Naive thymus-derived CD4-positive, alpha-beta T cell (primary cell): ENCODE measurements at regions of chr3 and their contacts with region 1.

Region 1: GRCh38 chr3:47380601-47381316 is at the start of gene PTPN23:
- DNase-seq: peak; percentile 96 to 99 (median 99)
- ATAC-seq: peak; percentile 82
- H3K4me3 ChIP-seq: peak within 1 kb of the TSS; percentile 86
- H3K4me3 Mint-ChIP-seq: peak within 1 kb of the TSS; percentile 90 to 100 (median 98)
- H3K27ac ChIP-seq: peak within 1 kb of the TSS; percentile 92
- H3K27ac Mint-ChIP-seq: peak within 1 kb of the TSS; percentile 92 to 100 (median 99)
- H3K4me1 ChIP-seq: peaks cover 23 to 26% of the 10 kb centered on the region in 2 donors
- H3K4me1 Mint-ChIP-seq: peaks cover 40 to 56% (median 48%) of the 10 kb centered on the region in 7 donors
- H3K27me3 ChIP-seq: no peaks in the 10 kb centered on the region
- H3K27me3 Mint-ChIP-seq: peaks cover 0 to 2% (median 0%) of the 10 kb centered on the region in 5 donors
- total RNA-seq, gene PTPN23: 35.8 to 51.2 (median 38.5) TPM

Region 2: DNA sequence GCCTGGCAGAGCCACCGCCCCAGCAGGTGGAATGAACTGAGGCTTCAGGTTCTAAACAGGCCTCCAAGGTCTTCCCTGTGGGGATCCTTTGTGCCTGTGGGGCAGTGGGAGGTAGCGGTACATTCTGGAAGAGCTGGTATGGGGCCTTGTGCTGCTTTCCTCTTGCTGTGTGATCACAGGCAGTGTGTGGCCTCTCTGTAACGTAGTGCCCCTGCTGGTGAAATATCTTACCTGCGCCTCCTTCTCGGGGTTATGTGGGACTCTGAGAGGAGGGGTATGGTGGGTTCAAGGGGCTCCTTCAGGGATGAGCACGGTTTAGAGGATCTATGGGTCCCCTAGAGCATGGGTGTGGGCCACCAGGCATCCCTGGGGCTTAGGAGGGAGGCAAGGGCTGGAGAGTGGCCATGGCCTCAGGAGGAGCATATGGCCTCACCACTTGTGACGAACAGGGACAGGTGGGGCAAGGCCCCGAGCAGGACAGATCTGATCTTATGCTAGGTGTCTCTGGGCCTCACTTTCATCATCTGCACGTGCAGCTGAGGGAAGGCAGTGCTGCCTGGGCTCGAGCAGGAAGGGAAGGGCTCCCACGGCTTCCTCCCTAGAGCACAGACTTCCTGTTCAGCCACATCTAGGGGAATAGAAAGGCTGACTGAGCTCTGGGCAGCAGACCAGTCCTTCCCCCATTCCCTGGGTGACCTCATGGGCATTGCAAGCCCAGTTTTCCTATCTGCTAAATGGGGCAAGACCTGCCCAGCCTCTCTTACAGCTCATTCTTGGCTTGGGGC is 685.4 kb before region 1 on chr3:
- CTCF ChIA-PET with region 1: no interaction called
- POLR2A ChIA-PET with region 1: interaction called, 3 read pairs
- intact Hi-C with region 1: loop called in 1 of 2 experiments (anchors 2 kb)
- DNase-seq: peak; percentile 19 to 58 (median 50)
- ATAC-seq: peak; percentile 37
- H3K4me3 ChIP-seq: peak overlapping the region; percentile 6
- H3K4me3 Mint-ChIP-seq: peak overlapping the region; percentile 40 to 94 (median 76)
- H3K27ac ChIP-seq: peak overlapping the region; percentile 75
- H3K27ac Mint-ChIP-seq: peak overlapping the region; percentile 76 to 95 (median 92)
- H3K4me1 ChIP-seq: peaks cover 32 to 78% of the 10 kb centered on the region in 2 donors
- H3K4me1 Mint-ChIP-seq: peaks cover 32 to 94% (median 69%) of the 10 kb centered on the region in 7 donors
- H3K27me3 ChIP-seq: no peaks in the 10 kb centered on the region
- H3K27me3 Mint-ChIP-seq: peaks cover 0 to 39% (median 0%) of the 10 kb centered on the region in 5 donors

Region 3: DNA sequence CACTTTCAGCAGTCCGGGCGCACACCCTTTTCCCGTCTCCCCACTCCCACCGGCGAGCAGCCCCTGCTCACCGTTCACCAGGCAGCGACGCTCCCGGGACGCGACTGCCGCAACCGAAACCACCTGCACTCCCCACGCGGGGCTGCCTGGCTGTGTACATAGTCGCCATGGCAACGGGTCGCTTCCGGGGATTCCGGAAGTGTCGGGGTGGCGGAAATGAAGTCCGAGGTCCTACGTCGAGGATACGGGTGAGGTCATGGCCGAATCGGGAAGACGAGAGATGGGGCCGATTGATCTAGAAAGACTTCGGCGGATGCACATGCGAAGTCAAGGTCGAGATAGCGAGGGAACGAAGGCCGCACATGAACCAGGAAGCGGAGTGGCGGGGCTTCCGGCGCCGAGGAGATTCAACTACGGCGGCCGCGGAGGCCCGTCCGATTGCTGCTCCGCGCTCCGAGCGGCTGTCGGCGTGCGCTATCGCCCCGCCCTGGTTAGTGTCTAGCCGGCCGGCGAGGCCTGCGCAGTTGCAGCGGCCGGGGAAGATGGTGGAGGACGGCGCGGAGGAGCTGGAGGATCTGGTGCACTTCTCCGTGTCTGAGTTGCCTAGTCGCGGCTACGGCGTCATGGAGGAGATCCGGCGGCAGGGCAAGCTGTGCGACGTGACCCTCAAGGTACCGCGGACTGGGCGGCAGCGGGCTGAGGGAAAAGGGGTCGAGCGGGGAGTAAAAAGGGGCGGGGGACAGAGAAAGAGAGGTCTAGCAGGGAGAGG is 98.2 kb before region 1 on chr3 and contains the starts of genes KIF9 and KLHL18:
- CTCF ChIA-PET with region 1: no interaction called
- POLR2A ChIA-PET with region 1: interaction called, 3 read pairs
- intact Hi-C with region 1: loop called (anchors 1 kb)
- DNase-seq: peak; percentile 86 to 98 (median 97)
- ATAC-seq: peak; percentile 91
- H3K4me3 ChIP-seq: peak within 1 kb of the TSS; percentile 76
- H3K4me3 Mint-ChIP-seq: peak within 1 kb of the TSS; percentile 89 to 100 (median 98)
- H3K27ac ChIP-seq: peak within 1 kb of the TSS; percentile 93
- H3K27ac Mint-ChIP-seq: peak within 1 kb of the TSS; percentile 98 to 100 (median 99)
- H3K4me1 ChIP-seq: peaks cover 14 to 23% of the 10 kb centered on the region in 2 donors
- H3K4me1 Mint-ChIP-seq: peaks cover 29 to 56% (median 43%) of the 10 kb centered on the region in 7 donors
- H3K27me3 ChIP-seq: no peaks in the 10 kb centered on the region
- H3K27me3 Mint-ChIP-seq: no peaks in the 10 kb centered on the region
- total RNA-seq, gene KIF9: 2.7 to 15.0 (median 4.1) TPM
- total RNA-seq, gene KLHL18: 21.7 to 47.5 (median 24.5) TPM

Region 4: GRCh38 chr3:47420511-47421484 is 40.0 kb after region 1 on chr3:
- CTCF ChIA-PET with region 1: no interaction called
- POLR2A ChIA-PET with region 1: no interaction called
- intact Hi-C with region 1: loop called (anchors 1 kb)
- DNase-seq: peak; percentile 66 to 90 (median 88)
- ATAC-seq: peak; percentile 98
- H3K4me3 ChIP-seq: peak overlapping the region; percentile 29
- H3K4me3 Mint-ChIP-seq: peak overlapping the region; percentile 56 to 86 (median 78)
- H3K27ac ChIP-seq: peak overlapping the region; percentile 79
- H3K27ac Mint-ChIP-seq: peak overlapping the region; percentile 90 to 100 (median 99)
- H3K4me1 ChIP-seq: peaks cover 8 to 15% of the 10 kb centered on the region in 2 donors
- H3K4me1 Mint-ChIP-seq: peaks cover 0 to 22% (median 10%) of the 10 kb centered on the region in 7 donors
- H3K27me3 ChIP-seq: no peaks in the 10 kb centered on the region
- H3K27me3 Mint-ChIP-seq: no peaks in the 10 kb centered on the region

Region 5: GRCh38 chr3:47802734-47803477 is 422.1 kb after region 1 on chr3 and contains the start of gene DHX30:
- CTCF ChIA-PET with region 1: no interaction called
- POLR2A ChIA-PET with region 1: no interaction called
- intact Hi-C with region 1: loop called in 1 of 2 experiments (anchors 1 kb)
- DNase-seq: peak; percentile 77 to 90 (median 82)
- ATAC-seq: peak; percentile 95
- H3K4me3 ChIP-seq: peak within 1 kb of the TSS; percentile 65
- H3K4me3 Mint-ChIP-seq: peak within 1 kb of the TSS; percentile 89 to 98 (median 95)
- H3K27ac ChIP-seq: peak within 1 kb of the TSS; percentile 92
- H3K27ac Mint-ChIP-seq: peak within 1 kb of the TSS; percentile 92 to 98 (median 95)
- H3K4me1 ChIP-seq: peaks cover 11 to 12% of the 10 kb centered on the region in 2 donors
- H3K4me1 Mint-ChIP-seq: peaks cover 6 to 25% (median 20%) of the 10 kb centered on the region in 7 donors
- H3K27me3 ChIP-seq: no peaks in the 10 kb centered on the region
- H3K27me3 Mint-ChIP-seq: no peaks in the 10 kb centered on the region
- total RNA-seq, gene DHX30: 64.1 to 103 (median 92.0) TPM

Region 6: DNA sequence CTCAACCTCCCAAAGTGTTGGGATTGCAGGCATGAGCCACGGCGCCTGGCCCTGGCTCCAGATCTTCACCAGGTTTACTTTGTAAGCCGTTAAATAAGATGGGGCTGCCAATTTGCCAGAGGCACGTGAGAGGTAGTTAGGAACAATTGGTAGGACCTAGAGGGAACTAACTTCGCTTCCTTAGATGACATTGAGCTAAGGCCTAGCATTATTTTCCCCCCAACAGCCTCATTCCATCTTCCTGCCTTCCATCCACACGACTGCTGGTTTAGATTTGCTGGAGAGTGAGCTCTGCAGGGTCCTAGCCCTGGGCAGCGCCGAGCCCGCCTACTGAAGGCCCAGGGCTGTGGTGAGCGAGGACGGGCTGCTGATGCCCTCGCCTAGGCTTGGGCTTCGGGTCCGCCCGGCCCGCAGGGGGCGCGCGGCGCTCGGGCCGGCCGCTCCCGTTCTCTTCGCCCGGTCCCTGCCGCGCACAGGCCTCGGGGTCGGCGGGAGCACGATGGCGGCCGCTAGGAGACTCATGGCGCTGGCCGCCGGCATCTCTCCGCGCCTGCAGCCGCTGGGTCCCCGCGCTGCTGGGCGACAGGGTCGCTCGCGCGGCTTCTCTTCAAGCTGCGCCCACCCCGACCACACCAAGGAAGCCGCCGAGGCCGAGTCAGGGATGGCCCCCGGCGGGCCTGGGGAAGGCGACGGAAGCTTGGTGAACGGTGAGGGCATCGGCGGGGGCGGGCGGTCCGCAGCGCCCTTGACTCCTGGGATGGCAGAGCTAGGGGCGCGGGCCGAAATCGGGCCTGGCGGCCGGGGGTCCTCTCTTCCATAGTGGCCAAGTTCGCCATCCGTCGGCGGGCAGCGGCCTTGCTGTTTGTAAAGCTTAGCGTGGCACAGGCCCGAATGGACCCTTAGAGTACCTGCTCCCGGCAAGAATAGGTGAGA is 444.0 kb after region 1 on chr3:
- CTCF ChIA-PET with region 1: no interaction called
- POLR2A ChIA-PET with region 1: no interaction called
- intact Hi-C with region 1: no loop called
- DNase-seq: peak; percentile 62 to 86 (median 79)
- ATAC-seq: peak; percentile 100
- H3K4me3 ChIP-seq: peak overlapping the region; percentile 79
- H3K4me3 Mint-ChIP-seq: peak overlapping the region; percentile 81 to 94 (median 90)
- H3K27ac ChIP-seq: peak overlapping the region; percentile 88
- H3K27ac Mint-ChIP-seq: peak overlapping the region; percentile 66 to 96 (median 89)
- H3K4me1 ChIP-seq: peaks cover 15% of the 10 kb centered on the region in 2 donors
- H3K4me1 Mint-ChIP-seq: peaks cover 15 to 46% (median 36%) of the 10 kb centered on the region in 7 donors
- H3K27me3 ChIP-seq: no peaks in the 10 kb centered on the region
- H3K27me3 Mint-ChIP-seq: no peaks in the 10 kb centered on the region